Dorsolateral prefrontal cortex (tissue), 120 donors: ENCODE measurements at regions of chr2 and their contacts with region 1.

Region 1: DNA sequence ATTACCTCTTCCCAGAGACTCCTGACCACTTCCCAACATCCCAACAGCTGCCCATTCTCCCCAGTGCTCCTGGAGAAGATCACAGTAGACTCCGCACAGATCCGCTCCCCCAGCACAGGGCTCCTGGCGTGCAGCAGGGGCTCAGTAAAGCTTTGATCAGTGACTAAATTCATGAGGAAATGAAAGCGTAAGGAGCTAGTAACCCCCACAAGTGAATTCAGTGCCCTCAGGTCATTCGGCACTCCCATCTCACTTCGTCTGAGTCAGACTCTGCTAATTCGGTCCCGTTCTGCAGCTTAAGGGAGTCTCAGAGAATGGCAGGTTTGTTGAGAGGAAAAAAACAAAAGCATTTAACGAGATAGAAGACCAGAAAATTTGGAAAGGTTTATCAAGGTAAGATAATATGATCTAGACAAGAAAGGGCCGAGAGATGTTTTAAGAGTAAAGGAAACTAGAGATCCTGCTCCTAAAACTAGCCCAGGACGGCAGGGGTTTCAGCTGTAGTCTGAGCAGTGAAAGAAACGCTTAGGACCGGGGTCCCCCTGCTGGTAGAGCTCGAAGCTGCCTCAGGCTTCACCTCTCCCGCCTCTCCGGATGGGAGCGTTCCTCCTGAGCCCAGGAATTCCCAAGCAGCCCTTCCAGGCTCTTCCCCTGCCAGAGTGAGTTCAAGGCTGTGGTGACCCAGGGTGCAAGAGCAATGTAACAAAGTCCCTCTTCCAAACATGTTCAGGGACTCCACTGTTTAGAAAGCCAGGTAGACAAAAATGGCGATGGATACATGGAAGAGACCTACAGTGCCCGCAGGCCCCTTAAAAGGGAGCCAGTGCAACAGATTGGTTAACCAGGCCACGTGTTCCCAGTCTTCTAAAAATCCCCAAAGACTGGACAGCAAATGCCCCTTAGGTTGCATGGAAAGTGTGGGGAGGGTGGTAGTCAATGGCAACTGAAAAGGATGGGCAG is 127.3 kb downstream of the DNER start:
- DNase-seq: peak; percentile 54 to 91 (median 88)
- H3K4me3 ChIP-seq: peak overlapping the region in 50 of 59 donors; percentile 4 to 59 (median 32)
- H3K27ac ChIP-seq: peak overlapping the region in 6 of 59 donors; percentile 7 to 61 (median 22)
- H3K27me3 ChIP-seq: no peaks in the 10 kb centered on the region
- CTCF ChIP-seq: peak; percentile 82 to 99 (median 94)

Region 2: GRCh38 chr2:229154381-229154780 is 432.6 kb before region 1 on chr2:
- intact Hi-C with region 1: loop called in 1 of 2 experiments (anchors 10 kb)
- DNase-seq: no peak
- H3K4me3 ChIP-seq: no peak overlapping the region
- H3K27ac ChIP-seq: no peak overlapping the region
- H3K27me3 ChIP-seq: no peaks in the 10 kb centered on the region
- CTCF ChIP-seq: no peak

Region 3: DNA sequence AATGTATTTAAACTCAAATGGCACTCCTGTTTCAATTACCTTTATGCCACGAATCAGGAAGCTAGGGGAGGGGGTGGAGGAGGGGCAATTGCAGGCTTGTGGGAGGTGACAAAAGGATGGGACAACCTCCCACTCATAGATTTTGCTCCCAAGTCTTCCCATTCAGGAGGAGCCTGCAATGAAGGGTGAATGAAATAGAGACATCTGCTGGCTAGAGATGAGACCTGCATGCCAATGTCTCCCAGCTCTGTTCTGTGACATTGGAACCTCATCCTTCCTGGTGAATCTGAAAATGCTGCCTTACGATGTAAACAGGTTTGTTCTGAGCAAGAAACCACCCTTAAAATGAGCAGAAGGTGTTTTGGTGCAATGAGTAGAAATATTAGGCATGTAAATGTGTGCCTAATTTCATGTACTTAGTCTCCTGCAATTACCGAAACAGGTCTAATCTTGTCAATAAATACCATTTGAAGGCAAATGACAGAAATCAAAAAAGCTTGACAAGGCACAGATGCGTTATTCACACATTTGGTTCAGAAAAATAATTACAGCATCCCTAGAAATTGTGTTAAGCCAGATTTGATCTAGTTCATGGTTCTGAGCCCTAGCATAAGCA is 313.2 kb before region 1 on chr2:
- intact Hi-C with region 1: loop called in 1 of 2 experiments (anchors 5 kb)
- DNase-seq: peak in 4 of 10 donors; percentile 25 to 59 (median 42)
- H3K4me3 ChIP-seq: peak overlapping the region; percentile 3 to 60 (median 40)
- H3K27ac ChIP-seq: peak overlapping the region in 3 of 59 donors; percentile 26 to 39 (median 33)
- H3K27me3 ChIP-seq: no peaks in the 10 kb centered on the region
- CTCF ChIP-seq: peak; percentile 55 to 90 (median 80)

Region 4: DNA sequence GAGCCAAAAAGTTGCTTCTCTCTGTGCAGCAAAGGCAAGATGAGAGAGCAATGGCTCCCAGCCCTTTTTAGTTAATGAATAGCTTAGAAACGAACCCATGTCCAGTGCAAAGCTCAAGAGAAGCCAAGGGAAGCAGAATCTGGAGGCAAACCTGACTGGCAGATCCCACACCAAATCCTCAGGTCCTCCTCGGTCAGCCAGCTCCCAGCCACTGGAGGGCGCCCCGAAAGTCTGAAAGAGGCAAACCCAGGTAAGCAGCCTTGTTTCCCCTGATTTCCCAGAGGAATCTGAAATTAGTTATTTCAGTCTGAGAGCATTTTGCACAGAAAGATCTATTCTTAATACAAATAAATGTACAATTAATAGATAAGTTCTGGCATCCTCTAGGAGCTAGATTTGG is 244.7 kb before region 1 on chr2:
- intact Hi-C with region 1: loop called (anchors 5 kb)
- DNase-seq: peak in 6 of 10 donors; percentile 7 to 55 (median 42)
- H3K4me3 ChIP-seq: no peak overlapping the region
- H3K27ac ChIP-seq: no peak overlapping the region
- H3K27me3 ChIP-seq: no peaks in the 10 kb centered on the region
- CTCF ChIP-seq: peak in 48 of 56 donors; percentile 13 to 67 (median 46)

Region 5: GRCh38 chr2:229431327-229431954 is 155.6 kb before region 1 on chr2:
- intact Hi-C with region 1: loop called (anchors 1 to 2 kb)
- DNase-seq: no peak
- H3K4me3 ChIP-seq: no peak overlapping the region
- H3K27ac ChIP-seq: peak overlapping the region in 1 of 59 donors; percentile 14
- H3K27me3 ChIP-seq: no peaks in the 10 kb centered on the region
- CTCF ChIP-seq: peak; percentile 39 to 77 (median 64)

Region 6: GRCh38 chr2:229501051-229501794 is 85.8 kb before region 1 on chr2:
- intact Hi-C with region 1: no loop called
- DNase-seq: no peak
- H3K4me3 ChIP-seq: no peak overlapping the region
- H3K27ac ChIP-seq: peak overlapping the region in 42 of 59 donors; percentile 3 to 87 (median 48)
- H3K27me3 ChIP-seq: no peaks in the 10 kb centered on the region
- CTCF ChIP-seq: no peak